Activated CD4-positive, alpha-beta memory T cell treated with anti-CD3 and anti-CD28 coated beads, Interleukin-2, amount 10 ng/mL, durations not matched to agents 7 days and 5 days (primary cell): ENCODE measurements at regions of chr2 and their contacts with region 1.

Region 1: GRCh38 chr2:197705121-197705911 is at the start of gene MARS2:
- DNase-seq: peak; percentile 94
- H3K4me3 Mint-ChIP-seq: peak within 1 kb of the TSS; percentile 88
- H3K27ac Mint-ChIP-seq: peak within 1 kb of the TSS; percentile 82
- H3K4me1 Mint-ChIP-seq: peaks cover 46% of the 10 kb centered on the region
- H3K27me3 Mint-ChIP-seq: no peaks in the 10 kb centered on the region
- total RNA-seq, gene MARS2: 9.6 to 9.9 TPM

Region 2: GRCh38 chr2:197499594-197500526 is 205.5 kb before region 1 on chr2 and contains the starts of genes HSPD1 and HSPE1:
- CTCF ChIA-PET with region 1: interaction called, 6 read pairs
- POLR2A ChIA-PET with region 1: interaction called, 25 read pairs
- DNase-seq: peak; percentile 98
- H3K4me3 Mint-ChIP-seq: peak within 1 kb of the TSS; percentile 92
- H3K27ac Mint-ChIP-seq: peak within 1 kb of the TSS; percentile 97
- H3K4me1 Mint-ChIP-seq: peaks cover 60% of the 10 kb centered on the region
- H3K27me3 Mint-ChIP-seq: no peaks in the 10 kb centered on the region
- total RNA-seq, gene HSPD1: 227 to 229 TPM
- total RNA-seq, gene HSPE1: 85.9 to 92.6 TPM

Region 3: GRCh38 chr2:197515739-197516392 is 189.4 kb before region 1 on chr2 and contains the start of gene MOB4:
- CTCF ChIA-PET with region 1: interaction called, 3 read pairs
- POLR2A ChIA-PET with region 1: interaction called, 35 read pairs
- DNase-seq: peak; percentile 95
- H3K4me3 Mint-ChIP-seq: peak within 1 kb of the TSS; percentile 96
- H3K27ac Mint-ChIP-seq: peak within 1 kb of the TSS; percentile 81
- H3K4me1 Mint-ChIP-seq: peaks cover 33% of the 10 kb centered on the region
- H3K27me3 Mint-ChIP-seq: no peaks in the 10 kb centered on the region
- total RNA-seq, gene MOB4: 23.5 to 24.8 TPM

Region 4: DNA sequence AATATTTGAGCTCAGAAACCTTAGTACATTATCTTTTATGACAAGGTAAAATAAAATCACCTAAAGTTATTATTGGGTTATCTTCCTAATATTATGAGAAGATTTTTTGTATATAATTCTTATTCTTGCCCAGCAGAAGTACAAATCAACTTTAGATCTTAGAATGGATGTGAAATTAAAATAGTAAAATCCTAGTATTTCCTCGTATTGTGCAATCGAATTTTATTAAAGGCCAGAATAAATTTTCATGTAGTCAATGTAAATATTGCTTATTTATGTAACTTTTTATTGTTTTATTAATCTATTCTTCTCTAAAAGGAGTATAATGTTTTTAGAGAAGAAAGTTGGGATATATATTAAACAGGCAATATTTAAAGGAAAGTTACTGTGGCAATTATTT is 12.5 kb after region 1 on chr2:
- CTCF ChIA-PET with region 1: interaction called, 13 read pairs
- POLR2A ChIA-PET with region 1: no interaction called
- DNase-seq: no peak
- H3K4me3 Mint-ChIP-seq: no peak overlapping the region
- H3K27ac Mint-ChIP-seq: no peak overlapping the region
- H3K4me1 Mint-ChIP-seq: peaks cover 6% of the 10 kb centered on the region
- H3K27me3 Mint-ChIP-seq: no peaks in the 10 kb centered on the region

Region 5: GRCh38 chr2:197777823-197778407 is 72.6 kb after region 1 on chr2:
- CTCF ChIA-PET with region 1: interaction called, 19 read pairs
- POLR2A ChIA-PET with region 1: no interaction called
- DNase-seq: no peak
- H3K4me3 Mint-ChIP-seq: no peak overlapping the region
- H3K27ac Mint-ChIP-seq: no peak overlapping the region
- H3K4me1 Mint-ChIP-seq: peaks cover 6% of the 10 kb centered on the region
- H3K27me3 Mint-ChIP-seq: peaks cover 17% of the 10 kb centered on the region